ENCODE measurements at regions of chr2 and their contacts with region 1.

Region 1: GRCh38 chr2:227450926-227451654 is 20.9 kb upstream of the AGFG1 start:
- DNase-seq: peak in 2 of 3 donors; percentile 73 to 78
- H3K4me3 ChIP-seq: peak overlapping the region in 1 of 3 experiments; percentile 29
- H3K4me3 Mint-ChIP-seq: peak overlapping the region in 1 of 2 donors; percentile 59
- H3K27ac ChIP-seq: peak overlapping the region; percentile 51 to 83
- H3K27ac Mint-ChIP-seq: peak overlapping the region; percentile 88 to 96 (median 93)
- H3K4me1 ChIP-seq: peaks cover 60 to 85% of the 10 kb centered on the region in 2 donors
- H3K4me1 Mint-ChIP-seq: peaks cover 80% of the 10 kb centered on the region
- H3K27me3 ChIP-seq: no peaks in the 10 kb centered on the region
- H3K27me3 Mint-ChIP-seq: peaks cover 0 to 2% (median 1%) of the 10 kb centered on the region in 3 donors
- CTCF ChIP-seq: no peak

Region 2: GRCh38 chr2:227415538-227416424 is 35.3 kb before region 1 on chr2:
- intact Hi-C with region 1: loop called in 1 of 2 experiments (anchors 5 kb)
- DNase-seq: peak; percentile 70 to 86 (median 80)
- H3K4me3 ChIP-seq: peak overlapping the region in 2 of 3 experiments; percentile 10 to 63
- H3K4me3 Mint-ChIP-seq: peak overlapping the region; percentile 64 to 82
- H3K27ac ChIP-seq: peak overlapping the region; percentile 69 to 85
- H3K27ac Mint-ChIP-seq: peak overlapping the region; percentile 93 to 98 (median 97)
- H3K4me1 ChIP-seq: peaks cover 75 to 84% of the 10 kb centered on the region in 2 donors
- H3K4me1 Mint-ChIP-seq: peaks cover 80% of the 10 kb centered on the region
- H3K27me3 ChIP-seq: no peaks in the 10 kb centered on the region
- H3K27me3 Mint-ChIP-seq: peaks cover 0 to 5% (median 2%) of the 10 kb centered on the region in 3 donors
- CTCF ChIP-seq: no peak

Region 3: DNA sequence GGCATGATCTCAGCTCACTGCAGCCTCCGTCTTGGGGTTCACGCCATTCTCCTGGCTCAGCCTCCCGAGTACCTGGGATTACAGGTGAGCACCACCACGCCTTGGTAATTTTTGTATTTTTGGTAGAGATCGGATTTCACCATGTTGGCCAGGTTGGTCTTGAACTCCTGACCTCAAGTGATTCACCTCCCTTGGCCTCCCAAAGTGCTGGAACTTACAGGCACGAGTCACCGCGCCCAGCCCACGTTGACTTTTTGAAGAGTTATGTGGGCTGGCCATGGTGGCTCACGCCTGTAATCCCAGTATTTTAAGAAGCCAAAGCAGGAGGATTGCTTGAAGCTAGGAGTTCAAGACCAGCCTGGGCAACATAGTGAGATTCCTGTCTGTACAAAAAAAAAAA is 383.3 kb after region 1 on chr2:
- intact Hi-C with region 1: no loop called
- DNase-seq: peak in 1 of 3 donors; percentile 58
- H3K4me3 ChIP-seq: no peak overlapping the region
- H3K4me3 Mint-ChIP-seq: no peak overlapping the region
- H3K27ac ChIP-seq: no peak overlapping the region
- H3K27ac Mint-ChIP-seq: peak overlapping the region in 1 of 7 donors; percentile 80
- H3K4me1 ChIP-seq: peaks cover 21 to 23% of the 10 kb centered on the region in 2 donors
- H3K4me1 Mint-ChIP-seq: peaks cover 20% of the 10 kb centered on the region
- H3K27me3 ChIP-seq: no peaks in the 10 kb centered on the region
- H3K27me3 Mint-ChIP-seq: peaks cover 3 to 5% (median 3%) of the 10 kb centered on the region in 3 donors
- CTCF ChIP-seq: no peak